ENCODE measurements at regions of chr1 and their contacts with region 1.

Region 1: GRCh38 chr1:204763706-204764427 is 78.3 kb upstream of the LRRN2 start:
- DNase-seq: peak; percentile 90
- H3K4me3 Mint-ChIP-seq: no peak overlapping the region
- H3K27ac Mint-ChIP-seq: no peak overlapping the region
- H3K4me1 Mint-ChIP-seq: peaks cover 10% of the 10 kb centered on the region
- H3K27me3 Mint-ChIP-seq: peaks cover 87% of the 10 kb centered on the region
- CTCF ChIP-seq: peak; percentile 91

Region 2: GRCh38 chr1:204565617-204566582 is 198.0 kb before region 1 on chr1:
- CTCF ChIA-PET with region 1: interaction called, 45 read pairs
- intact Hi-C with region 1: loop called (anchors 1 kb)
- DNase-seq: peak; percentile 65
- H3K4me3 Mint-ChIP-seq: peak overlapping the region; percentile 13
- H3K27ac Mint-ChIP-seq: no peak overlapping the region
- H3K4me1 Mint-ChIP-seq: peaks cover 32% of the 10 kb centered on the region
- H3K27me3 Mint-ChIP-seq: no peaks in the 10 kb centered on the region
- CTCF ChIP-seq: peak; percentile 87

Region 3: DNA sequence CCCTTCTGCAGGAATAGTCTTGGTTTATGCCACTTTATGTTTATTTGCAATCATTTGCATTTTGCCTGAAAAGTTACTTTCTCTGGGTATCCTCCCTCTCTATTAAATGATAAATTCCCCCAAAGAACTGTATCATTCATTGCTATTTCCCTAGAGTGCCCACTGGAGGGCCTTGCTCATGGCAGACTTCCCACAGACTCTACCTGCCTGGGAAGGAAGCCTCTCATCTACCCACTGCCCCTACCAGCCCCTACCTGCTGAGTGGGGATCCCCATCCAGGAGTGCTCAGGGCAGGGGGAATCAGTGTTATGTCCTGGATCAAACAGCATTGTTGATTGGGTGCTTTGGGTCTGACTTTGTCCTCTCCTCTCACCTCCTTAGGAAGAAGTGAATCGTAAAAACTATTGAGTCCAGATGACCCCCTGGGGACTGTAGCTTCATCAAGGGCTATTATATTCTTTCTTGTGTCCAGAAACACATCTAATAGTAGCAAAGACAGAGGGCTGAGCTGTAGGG is 71.5 kb before region 1 on chr1:
- CTCF ChIA-PET with region 1: interaction called, 9 read pairs
- intact Hi-C with region 1: loop called (anchors 5 kb)
- DNase-seq: peak; percentile 22
- H3K4me3 Mint-ChIP-seq: no peak overlapping the region
- H3K27ac Mint-ChIP-seq: no peak overlapping the region
- H3K4me1 Mint-ChIP-seq: no peaks in the 10 kb centered on the region
- H3K27me3 Mint-ChIP-seq: peaks cover 82% of the 10 kb centered on the region
- CTCF ChIP-seq: no peak

Region 4: GRCh38 chr1:204751894-204752687 is 11.8 kb before region 1 on chr1:
- CTCF ChIA-PET with region 1: interaction called, 10 read pairs
- intact Hi-C with region 1: no loop called
- DNase-seq: peak; percentile 85
- H3K4me3 Mint-ChIP-seq: no peak overlapping the region
- H3K27ac Mint-ChIP-seq: no peak overlapping the region
- H3K4me1 Mint-ChIP-seq: peaks cover 7% of the 10 kb centered on the region
- H3K27me3 Mint-ChIP-seq: peaks cover 57% of the 10 kb centered on the region
- CTCF ChIP-seq: peak; percentile 26